Heart left ventricle (tissue), 16 donors: ENCODE measurements at regions of chr15 and their contacts with region 1.

Region 1: GRCh38 chr15:34347951-34348638 is 5.0 kb downstream of the NUTM1 start:
- DNase-seq: no peak
- ATAC-seq: no peak
- H3K4me3 ChIP-seq: no peak overlapping the region
- H3K27ac ChIP-seq: no peak overlapping the region
- H3K4me1 ChIP-seq: peaks cover 0 to 3% (median 0%) of the 10 kb centered on the region in 12 donors
- H3K27me3 ChIP-seq: no peaks in the 10 kb centered on the region
- CTCF ChIP-seq: no peak
- POLR2A ChIP-seq: no peak

Region 2: GRCh38 chr15:34259566-34259965 is 88.5 kb before region 1 on chr15:
- intact Hi-C with region 1: loop called in 2 of 10 experiments (anchors 5 kb)
- DNase-seq: peak in 4 of 5 donors; percentile 42 to 60 (median 50)
- ATAC-seq: peak; percentile 89 to 92 (median 90)
- H3K4me3 ChIP-seq: no peak overlapping the region
- H3K27ac ChIP-seq: peak overlapping the region; percentile 2 to 82 (median 60)
- H3K4me1 ChIP-seq: peaks cover 0 to 23% (median 2%) of the 10 kb centered on the region in 12 donors
- H3K27me3 ChIP-seq: no peaks in the 10 kb centered on the region
- CTCF ChIP-seq: no peak
- POLR2A ChIP-seq: no peak